Endothelial cell of umbilical vein (primary cell): ENCODE measurements at regions of chr5 and their contacts with region 1.

Region 1: DNA sequence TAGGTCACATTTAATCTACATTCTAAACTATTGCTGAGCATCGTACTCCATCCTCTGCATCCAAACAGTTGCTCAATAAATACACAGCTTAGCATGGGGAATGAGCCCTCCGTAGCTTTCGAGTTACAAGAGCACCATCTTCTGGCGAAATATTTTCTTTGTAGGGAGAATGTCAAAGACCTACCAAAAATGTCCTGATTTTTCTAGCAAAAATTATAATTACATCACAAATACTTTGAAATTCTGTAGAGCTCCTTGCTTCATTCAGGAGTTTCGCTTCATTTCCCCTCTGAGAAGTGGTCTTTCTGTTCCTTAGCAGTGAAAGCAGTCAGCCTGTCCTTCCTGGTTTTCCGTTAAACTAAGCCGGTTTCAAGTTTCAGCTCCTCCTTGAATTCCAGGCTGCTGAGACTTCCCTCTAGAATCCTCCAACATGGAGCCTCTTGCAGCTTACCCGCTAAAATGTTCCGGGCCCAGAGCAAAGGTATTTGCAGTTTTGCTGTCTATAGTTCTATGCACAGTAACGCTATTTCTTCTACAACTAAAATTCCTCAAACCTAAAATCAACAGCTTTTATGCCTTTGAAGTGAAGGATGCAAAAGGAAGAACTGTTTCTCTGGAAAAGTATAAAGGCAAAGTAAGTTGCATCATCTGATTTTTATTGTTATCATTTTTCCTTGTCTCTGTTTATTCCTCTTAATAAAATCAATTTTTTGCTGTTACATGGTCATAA is at the start of gene GPX8:
- DNase-seq: peak; percentile 89
- H3K4me3 ChIP-seq: peak within 1 kb of the TSS; percentile 66 to 100 (median 96)
- H3K27ac ChIP-seq: peak within 1 kb of the TSS; percentile 89
- H3K4me1 ChIP-seq: peaks cover 53% of the 10 kb centered on the region
- H3K27me3 ChIP-seq: no peaks in the 10 kb centered on the region
- CTCF ChIP-seq: peak; percentile 42 to 46
- POLR2A ChIP-seq: peak; percentile 88
- total RNA-seq, gene GPX8: 147 and 161 TPM in 2 replicates

Region 2: DNA sequence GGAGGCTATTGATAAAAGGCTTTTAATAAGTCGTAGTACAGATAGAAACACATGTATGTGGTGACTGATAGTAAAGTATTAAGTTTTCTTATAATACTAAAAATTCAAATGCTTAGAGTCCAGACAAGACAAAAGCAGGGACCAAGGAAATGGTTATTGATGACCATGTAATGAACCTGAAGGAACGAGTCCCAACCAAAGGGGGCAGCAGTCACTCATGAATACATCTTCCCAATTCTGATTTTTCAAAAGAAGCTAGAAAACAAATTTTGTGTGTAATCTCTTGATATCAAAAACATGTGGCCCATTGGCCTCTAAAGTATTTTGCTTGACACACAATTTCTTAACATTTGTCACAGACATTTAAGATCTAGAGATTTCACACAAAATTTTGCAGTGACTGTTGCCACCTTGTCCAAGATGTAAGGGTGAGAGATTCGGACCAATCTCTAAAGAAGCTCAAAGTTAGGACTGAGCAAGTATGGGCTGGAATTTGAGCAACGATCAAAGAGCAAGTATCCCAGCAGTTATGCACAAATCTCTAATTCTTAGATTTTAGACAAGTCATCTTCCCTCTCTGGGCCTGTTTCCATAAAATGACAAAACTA is 916.4 kb before region 1 on chr5:
- CTCF ChIA-PET with region 1: interaction called, 11 read pairs
- POLR2A ChIA-PET with region 1: no interaction called
- dilution Hi-C with region 1: no loop called
- intact Hi-C with region 1: loop called (anchors 2 kb)
- DNase-seq: peak; percentile 47
- H3K4me3 ChIP-seq: no peak overlapping the region
- H3K27ac ChIP-seq: no peak overlapping the region
- H3K4me1 ChIP-seq: peaks cover 14% of the 10 kb centered on the region
- H3K27me3 ChIP-seq: peaks cover 0 to 1% of the 10 kb centered on the region in 2 experiments
- CTCF ChIP-seq: peak; percentile 44 to 48
- POLR2A ChIP-seq: no peak

Region 3: DNA sequence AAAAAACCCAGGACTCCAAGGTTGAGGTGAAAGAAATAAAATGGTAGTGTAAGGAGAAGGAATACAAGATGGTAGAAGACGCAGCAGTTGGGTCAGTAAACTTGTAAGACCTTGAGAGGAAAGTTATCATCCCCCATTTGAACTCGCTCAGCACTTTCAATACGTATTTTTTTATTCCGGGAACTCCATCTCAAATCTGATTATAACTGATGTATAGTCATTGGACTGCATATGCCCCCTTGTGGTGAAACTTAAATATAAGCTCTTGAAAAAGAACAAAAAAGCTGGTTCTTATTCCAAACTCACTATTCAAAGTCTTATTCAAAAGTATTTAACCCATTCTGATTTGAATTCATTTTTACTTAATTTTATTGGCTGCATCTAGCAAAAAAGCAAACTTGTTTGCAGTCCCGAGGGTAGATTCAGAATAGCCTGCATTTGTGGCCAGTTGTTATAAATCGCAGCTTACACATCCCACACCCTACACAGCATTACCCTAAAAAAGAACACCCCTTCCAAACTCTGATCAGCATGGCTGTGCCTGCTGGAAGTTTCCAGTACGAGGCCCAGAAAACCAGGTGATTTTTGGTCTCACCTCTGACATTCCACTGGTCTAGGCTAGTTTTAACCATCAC is 292.5 kb before region 1 on chr5:
- CTCF ChIA-PET with region 1: interaction called, 68 read pairs
- POLR2A ChIA-PET with region 1: no interaction called
- dilution Hi-C with region 1: no loop called
- intact Hi-C with region 1: no loop called
- DNase-seq: peak; percentile 70
- H3K4me3 ChIP-seq: no peak overlapping the region
- H3K27ac ChIP-seq: no peak overlapping the region
- H3K4me1 ChIP-seq: no peaks in the 10 kb centered on the region
- H3K27me3 ChIP-seq: peaks cover 0 to 4% of the 10 kb centered on the region in 2 experiments
- CTCF ChIP-seq: peak; percentile 37 to 40
- POLR2A ChIP-seq: no peak

Region 4: GRCh38 chr5:54905943-54906537 is 253.9 kb before region 1 on chr5:
- CTCF ChIA-PET with region 1: interaction called, 480 read pairs
- POLR2A ChIA-PET with region 1: interaction called, 8 read pairs
- dilution Hi-C with region 1: no loop called
- intact Hi-C with region 1: loop called (anchors 1 kb)
- DNase-seq: peak; percentile 91
- H3K4me3 ChIP-seq: peak overlapping the region in 1 of 3 experiments; percentile 7
- H3K27ac ChIP-seq: no peak overlapping the region
- H3K4me1 ChIP-seq: peaks cover 39% of the 10 kb centered on the region
- H3K27me3 ChIP-seq: no peaks in the 10 kb centered on the region
- CTCF ChIP-seq: peak; percentile 59 to 63
- POLR2A ChIP-seq: no peak

Region 5: DNA sequence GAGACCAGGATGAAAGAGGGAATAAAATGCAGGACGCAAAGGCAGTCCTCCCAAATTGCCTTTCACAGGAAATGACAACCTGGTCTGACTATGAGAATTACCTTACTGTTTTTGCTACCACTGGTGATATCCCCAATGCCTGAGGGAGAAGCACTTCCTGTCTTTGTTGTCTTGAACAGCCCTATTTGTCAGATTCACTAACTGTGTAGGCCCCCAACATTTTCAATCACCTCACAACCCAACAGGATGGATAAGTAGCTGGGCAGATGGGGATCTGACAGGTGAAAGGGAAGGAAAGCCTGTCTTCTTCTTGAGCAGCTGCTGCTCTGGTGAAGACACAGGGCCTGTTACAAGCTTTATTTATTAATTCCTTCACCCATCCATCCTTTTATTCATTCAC is 184.2 kb before region 1 on chr5:
- CTCF ChIA-PET with region 1: interaction called, 57 read pairs
- POLR2A ChIA-PET with region 1: no interaction called
- dilution Hi-C with region 1: no loop called
- intact Hi-C with region 1: no loop called
- DNase-seq: peak; percentile 34
- H3K4me3 ChIP-seq: no peak overlapping the region
- H3K27ac ChIP-seq: no peak overlapping the region
- H3K4me1 ChIP-seq: peaks cover 52% of the 10 kb centered on the region
- H3K27me3 ChIP-seq: no peaks in the 10 kb centered on the region
- CTCF ChIP-seq: no peak
- POLR2A ChIP-seq: peak; percentile 83

Region 6: DNA sequence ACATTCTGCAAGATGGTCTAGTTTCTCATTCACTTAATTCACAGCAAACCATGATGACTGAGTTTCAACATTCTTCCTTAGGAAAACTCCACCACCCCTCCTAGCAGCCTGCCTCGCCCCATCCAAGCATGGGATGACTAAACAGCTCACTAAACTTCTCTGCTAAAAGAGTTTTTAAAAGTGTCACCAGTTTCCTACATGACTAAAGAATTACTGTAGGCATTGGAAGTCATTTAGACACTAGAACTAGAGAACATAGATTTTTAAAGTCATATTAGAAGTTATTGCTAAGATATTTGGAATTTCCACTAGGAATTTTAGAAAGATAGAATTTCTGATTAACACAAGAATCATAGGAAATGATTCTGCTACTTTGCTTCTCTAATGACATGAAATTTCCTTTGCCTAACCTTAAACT is 169.1 kb before region 1 on chr5:
- CTCF ChIA-PET with region 1: interaction called, 57 read pairs
- POLR2A ChIA-PET with region 1: interaction called, 4 read pairs
- dilution Hi-C with region 1: no loop called
- intact Hi-C with region 1: no loop called
- DNase-seq: peak; percentile 71
- H3K4me3 ChIP-seq: no peak overlapping the region
- H3K27ac ChIP-seq: peak overlapping the region; percentile 82
- H3K4me1 ChIP-seq: peaks cover 71% of the 10 kb centered on the region
- H3K27me3 ChIP-seq: no peaks in the 10 kb centered on the region
- CTCF ChIP-seq: no peak
- POLR2A ChIP-seq: no peak

Region 7: GRCh38 chr5:55172051-55172899 is 12.3 kb after region 1 on chr5:
- CTCF ChIA-PET with region 1: interaction called, 13 read pairs
- POLR2A ChIA-PET with region 1: no interaction called
- dilution Hi-C with region 1: no loop called
- intact Hi-C with region 1: no loop called
- DNase-seq: peak; percentile 79
- H3K4me3 ChIP-seq: peak overlapping the region in 2 of 3 experiments; percentile 28 to 46
- H3K27ac ChIP-seq: no peak overlapping the region
- H3K4me1 ChIP-seq: peaks cover 21% of the 10 kb centered on the region
- H3K27me3 ChIP-seq: peaks cover 31 to 39% of the 10 kb centered on the region in 2 experiments
- CTCF ChIP-seq: peak; percentile 60 to 70
- POLR2A ChIP-seq: no peak

Region 8: GRCh38 chr5:55278778-55279177 is 118.8 kb after region 1 on chr5:
- CTCF ChIA-PET with region 1: no interaction called
- POLR2A ChIA-PET with region 1: no interaction called
- dilution Hi-C with region 1: no loop called
- intact Hi-C with region 1: no loop called
- DNase-seq: no peak
- H3K4me3 ChIP-seq: no peak overlapping the region
- H3K27ac ChIP-seq: no peak overlapping the region
- H3K4me1 ChIP-seq: no peaks in the 10 kb centered on the region
- H3K27me3 ChIP-seq: no peaks in the 10 kb centered on the region
- CTCF ChIP-seq: no peak
- POLR2A ChIP-seq: no peak